Head of caudate nucleus (tissue), 42 donors: ENCODE measurements at regions of chr2 and their contacts with region 1.

Region 1: GRCh38 chr2:217785544-217786045 is 217.2 kb downstream of the TNS1 start:
- DNase-seq: peak; percentile 58 to 95 (median 86)

Region 2: GRCh38 chr2:217886720-217887309 is 101.2 kb after region 1 on chr2:
- intact Hi-C with region 1: loop called (anchors 2 kb)
- DNase-seq: peak; percentile 53 to 94 (median 86)

Region 3: DNA sequence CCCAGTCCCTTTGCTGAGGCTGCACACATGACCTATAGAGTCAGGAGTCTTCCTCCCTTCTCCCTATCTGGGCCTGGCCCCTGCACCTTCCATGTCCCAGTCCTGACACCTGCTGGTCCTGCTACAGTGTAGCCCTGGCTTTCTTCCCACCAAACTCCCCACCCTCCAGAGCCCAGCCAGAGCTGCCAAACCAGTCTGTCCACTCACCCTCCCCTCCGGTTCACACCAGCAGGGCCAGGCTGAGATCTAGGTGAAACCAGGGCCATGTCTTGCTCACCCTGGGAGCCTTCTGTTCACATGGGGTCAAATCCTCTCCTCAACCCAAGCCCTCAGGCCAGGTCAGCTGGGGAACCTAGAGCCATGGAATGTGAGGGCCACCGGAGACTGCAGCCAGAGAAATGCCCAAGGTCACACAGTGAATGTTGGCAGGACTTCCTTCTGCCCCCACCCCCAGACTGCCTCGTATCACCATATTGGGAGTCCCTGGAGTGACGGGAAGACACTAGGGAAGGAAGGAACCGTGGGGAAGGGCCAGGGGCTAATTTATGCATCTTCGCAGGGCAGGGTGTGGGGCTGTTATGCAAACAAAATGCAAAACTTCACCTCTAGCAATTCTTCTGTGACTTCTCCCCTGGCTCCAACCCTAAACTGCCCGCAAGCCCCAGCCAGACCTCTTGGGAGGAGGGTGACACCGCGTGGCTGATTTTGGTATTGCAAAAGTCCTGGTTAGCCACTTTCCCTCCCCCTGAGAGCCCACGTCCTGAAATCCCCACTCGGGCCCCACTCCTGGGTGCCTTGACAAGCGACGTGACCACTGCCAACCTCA is 202.6 kb after region 1 on chr2:
- intact Hi-C with region 1: loop called (anchors 5 kb)
- DNase-seq: peak; percentile 62 to 95 (median 86)

Region 4: GRCh38 chr2:218033590-218034496 is 248.2 kb after region 1 on chr2:
- intact Hi-C with region 1: loop called (anchors 2 kb)
- DNase-seq: peak in 2 of 42 donors; percentile 27 to 34

Region 5: DNA sequence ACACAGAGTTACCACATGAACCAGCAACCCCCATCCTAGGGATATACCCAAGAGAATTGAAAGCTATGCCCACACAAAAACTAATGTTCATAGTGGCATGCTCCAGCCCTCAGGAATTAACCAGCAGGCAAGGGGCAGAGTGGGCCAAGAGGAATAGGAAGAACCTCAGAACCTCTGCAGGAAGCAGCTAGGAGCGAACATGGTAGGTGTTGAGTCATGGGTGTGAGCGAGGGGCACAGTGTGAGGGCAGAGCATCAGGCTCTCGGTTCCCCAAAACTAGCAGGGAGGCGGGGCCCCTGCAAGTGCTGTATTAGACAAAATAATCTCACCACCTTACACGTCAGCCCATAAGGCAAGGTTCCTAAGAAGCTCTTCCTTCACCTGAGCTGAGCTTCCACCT is 277.9 kb after region 1 on chr2:
- intact Hi-C with region 1: loop called (anchors 10 kb)
- DNase-seq: peak in 2 of 42 donors; percentile 5 to 41

Region 6: DNA sequence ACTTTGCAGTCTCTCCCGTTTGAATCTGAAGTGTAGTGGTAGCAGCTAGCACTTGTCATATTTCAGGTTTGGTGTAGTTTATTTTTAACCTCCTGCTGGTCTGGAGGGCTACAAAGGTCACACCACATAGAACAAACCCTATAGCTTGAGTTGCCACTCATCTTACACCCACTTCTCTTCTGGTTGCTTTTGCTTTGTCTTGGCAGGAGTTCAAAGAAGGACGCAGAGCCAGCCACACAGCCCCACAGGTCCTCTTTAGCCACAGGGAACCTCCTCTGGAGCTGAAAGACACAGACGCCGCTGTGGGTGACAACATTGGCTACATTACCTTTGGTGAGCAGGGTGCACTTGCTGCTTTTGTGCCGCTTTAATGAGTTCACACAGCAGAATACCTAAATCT is 459.6 kb after region 1 on chr2:
- intact Hi-C with region 1: no loop called
- DNase-seq: no peak